Activated CD4-positive, alpha-beta memory T cell treated with anti-CD3 and anti-CD28 coated beads for 36 hours (primary cell): ENCODE measurements at regions of chr11 and their contacts with region 1.

Region 1: GRCh38 chr11:17230867-17231851 is 23.4 kb upstream of the PIK3C2A start:
- DNase-seq: peak; percentile 63
- H3K4me3 Mint-ChIP-seq: no peak overlapping the region
- H3K27ac Mint-ChIP-seq: no peak overlapping the region
- H3K4me1 Mint-ChIP-seq: peaks cover 13% of the 10 kb centered on the region
- H3K27me3 Mint-ChIP-seq: peaks cover 11% of the 10 kb centered on the region

Region 2: GRCh38 chr11:17207317-17208258 is 23.6 kb before region 1 on chr11 and contains the start of gene PIK3C2A:
- CTCF ChIA-PET with region 1: interaction called, 13 read pairs
- POLR2A ChIA-PET with region 1: no interaction called
- intact Hi-C with region 1: loop called (anchors 1 kb)
- DNase-seq: peak; percentile 96
- H3K4me3 Mint-ChIP-seq: peak within 1 kb of the TSS; percentile 99
- H3K27ac Mint-ChIP-seq: peak within 1 kb of the TSS; percentile 90
- H3K4me1 Mint-ChIP-seq: peaks cover 35% of the 10 kb centered on the region
- H3K27me3 Mint-ChIP-seq: no peaks in the 10 kb centered on the region
- total RNA-seq, gene PIK3C2A: 21.2 to 21.7 TPM

Region 3: DNA sequence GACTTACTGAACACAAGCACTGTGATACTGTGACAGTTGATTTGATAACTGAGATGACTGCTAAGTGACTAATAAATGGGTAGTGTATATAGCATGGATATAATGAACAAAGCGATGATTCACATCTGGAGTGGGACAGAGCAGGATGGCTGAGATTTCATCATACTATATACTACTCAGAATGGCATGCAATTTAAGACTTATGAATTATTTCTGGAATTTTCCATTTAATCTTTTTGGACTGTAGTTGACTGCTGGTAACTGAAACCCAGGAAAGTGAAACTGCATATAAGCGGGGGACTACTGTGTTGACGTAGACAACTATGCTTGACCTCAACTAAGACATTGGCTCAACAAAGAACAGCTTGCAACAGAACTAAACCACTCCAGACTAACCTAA is 25.4 kb after region 1 on chr11:
- CTCF ChIA-PET with region 1: no interaction called
- POLR2A ChIA-PET with region 1: no interaction called
- intact Hi-C with region 1: loop called (anchors 1 kb)
- DNase-seq: no peak
- H3K4me3 Mint-ChIP-seq: no peak overlapping the region
- H3K27ac Mint-ChIP-seq: no peak overlapping the region
- H3K4me1 Mint-ChIP-seq: peaks cover 22% of the 10 kb centered on the region
- H3K27me3 Mint-ChIP-seq: peaks cover 10% of the 10 kb centered on the region

Region 4: GRCh38 chr11:17384002-17384511 is 152.9 kb after region 1 on chr11:
- CTCF ChIA-PET with region 1: interaction called, 36 read pairs
- POLR2A ChIA-PET with region 1: interaction called, 3 read pairs
- intact Hi-C with region 1: loop called (anchors 1 kb)
- DNase-seq: peak; percentile 81
- H3K4me3 Mint-ChIP-seq: no peak overlapping the region
- H3K27ac Mint-ChIP-seq: no peak overlapping the region
- H3K4me1 Mint-ChIP-seq: no peaks in the 10 kb centered on the region
- H3K27me3 Mint-ChIP-seq: peaks cover 4% of the 10 kb centered on the region

Region 5: GRCh38 chr11:17528181-17528691 is 297.1 kb after region 1 on chr11:
- CTCF ChIA-PET with region 1: interaction called, 23 read pairs
- POLR2A ChIA-PET with region 1: no interaction called
- intact Hi-C with region 1: no loop called
- DNase-seq: peak; percentile 69
- H3K4me3 Mint-ChIP-seq: no peak overlapping the region
- H3K27ac Mint-ChIP-seq: no peak overlapping the region
- H3K4me1 Mint-ChIP-seq: no peaks in the 10 kb centered on the region
- H3K27me3 Mint-ChIP-seq: peaks cover 9% of the 10 kb centered on the region

Region 6: GRCh38 chr11:18063084-18063483 is 831.9 kb after region 1 on chr11:
- CTCF ChIA-PET with region 1: no interaction called
- POLR2A ChIA-PET with region 1: no interaction called
- intact Hi-C with region 1: no loop called
- DNase-seq: no peak
- H3K4me3 Mint-ChIP-seq: no peak overlapping the region
- H3K27ac Mint-ChIP-seq: no peak overlapping the region
- H3K4me1 Mint-ChIP-seq: no peaks in the 10 kb centered on the region
- H3K27me3 Mint-ChIP-seq: no peaks in the 10 kb centered on the region